ENCODE measurements at regions of chr19 and their contacts with region 1.

Region 1: DNA sequence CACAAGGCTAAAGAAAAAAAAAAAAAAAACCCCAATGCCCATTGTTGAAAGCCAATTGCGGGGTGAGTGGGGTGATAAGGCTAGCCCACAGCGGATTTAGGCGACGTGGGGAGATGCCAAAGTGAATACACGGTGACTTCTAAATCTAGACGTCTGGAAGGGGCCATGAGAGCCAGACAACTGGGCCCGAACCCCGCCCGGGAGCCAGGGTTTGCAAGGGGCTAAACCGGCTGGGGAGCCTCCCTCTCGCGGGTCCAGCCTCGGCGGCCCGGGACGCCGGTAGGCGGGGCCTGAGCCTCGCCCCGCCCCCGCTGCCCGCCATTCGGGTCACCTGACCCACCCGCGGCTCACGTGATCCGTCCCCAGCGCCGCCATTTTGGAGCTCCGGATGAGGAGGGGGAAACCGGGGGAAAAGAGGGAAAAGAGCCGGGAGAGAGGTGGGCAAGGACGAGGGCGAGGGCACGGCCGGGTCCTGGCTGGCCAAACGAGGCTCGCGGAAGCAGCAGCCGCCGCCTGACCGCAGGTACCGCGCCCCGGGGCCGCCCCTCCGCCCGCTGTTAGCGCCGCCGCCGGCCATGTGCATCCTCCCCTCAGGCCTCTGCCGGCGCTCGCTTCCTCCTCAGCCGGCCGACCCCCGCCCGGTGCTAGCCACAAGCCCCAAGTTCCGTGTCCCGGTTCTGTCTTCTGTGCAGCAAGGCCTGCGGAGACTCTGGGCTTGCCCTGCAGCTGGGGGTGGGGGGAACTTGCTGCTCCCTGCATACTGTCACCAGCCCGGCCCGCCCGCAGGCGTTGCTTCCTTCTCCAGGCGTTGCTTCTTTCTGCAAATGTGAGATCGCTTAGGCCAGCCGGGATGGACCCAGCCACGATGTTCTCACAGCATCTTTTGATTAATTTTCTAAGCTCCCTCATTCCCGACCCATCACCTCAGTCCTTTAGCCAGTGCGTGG is at the start of gene ZNF507:
- DNase-seq: peak in 1 of 2 donors; percentile 86
- H3K4me3 ChIP-seq: peak within 1 kb of the TSS; percentile 67 to 94
- H3K27ac ChIP-seq: peak within 1 kb of the TSS; percentile 51 to 73
- H3K4me1 ChIP-seq: peaks cover 3 to 22% of the 10 kb centered on the region in 2 donors
- H3K27me3 ChIP-seq: no peaks in the 10 kb centered on the region
- CTCF ChIP-seq: peak in 1 of 3 experiments; percentile 10
- total RNA-seq, gene ZNF507: 6.4 TPM

Region 2: DNA sequence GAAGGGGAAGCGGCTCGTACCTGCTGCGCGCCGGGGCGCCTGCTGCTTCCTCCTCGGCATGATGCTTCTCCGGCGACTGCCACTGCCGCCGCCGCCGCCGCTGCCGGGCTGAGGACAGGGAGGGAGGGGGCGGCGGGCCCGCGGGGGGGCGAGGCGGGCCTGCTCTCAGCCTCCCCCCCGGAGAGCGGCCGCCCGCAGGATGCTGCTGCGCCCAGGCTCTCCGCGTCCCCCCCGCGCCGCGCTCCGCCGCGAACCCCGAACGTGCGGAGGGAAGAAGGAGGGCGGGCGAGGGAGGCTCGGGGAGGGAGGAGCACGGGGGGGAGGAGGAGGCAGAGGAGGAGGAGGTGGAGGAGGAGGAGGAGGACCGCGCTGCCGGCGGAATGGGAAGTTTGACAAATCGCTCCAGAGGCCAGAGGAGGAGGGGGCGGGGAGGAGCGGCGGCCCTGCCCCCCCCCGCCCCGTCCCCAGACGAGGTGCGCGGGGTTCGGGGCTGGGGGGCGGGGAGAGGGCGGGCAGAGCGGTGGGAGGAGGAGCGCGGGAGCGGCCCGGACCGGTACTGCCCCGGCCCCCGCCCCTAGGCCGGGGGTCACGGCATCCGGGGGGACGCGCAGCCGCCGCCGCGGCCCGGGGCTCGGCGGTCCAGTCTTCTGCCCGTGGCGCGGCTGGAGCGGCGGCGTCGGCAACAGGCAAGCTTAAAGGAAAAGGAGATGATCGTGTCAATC is 996.2 kb before region 1 on chr19 and contains the start of gene TSHZ3:
- intact Hi-C with region 1: loop called (anchors 10 kb)
- DNase-seq: peak in 1 of 2 donors; percentile 85
- H3K4me3 ChIP-seq: peak within 1 kb of the TSS; percentile 88 to 98
- H3K27ac ChIP-seq: peak within 1 kb of the TSS; percentile 75 to 90
- H3K4me1 ChIP-seq: peaks cover 7 to 13% of the 10 kb centered on the region in 2 donors
- H3K27me3 ChIP-seq: no peaks in the 10 kb centered on the region
- CTCF ChIP-seq: no peak
- total RNA-seq, gene TSHZ3: 9.9 TPM

Region 3: DNA sequence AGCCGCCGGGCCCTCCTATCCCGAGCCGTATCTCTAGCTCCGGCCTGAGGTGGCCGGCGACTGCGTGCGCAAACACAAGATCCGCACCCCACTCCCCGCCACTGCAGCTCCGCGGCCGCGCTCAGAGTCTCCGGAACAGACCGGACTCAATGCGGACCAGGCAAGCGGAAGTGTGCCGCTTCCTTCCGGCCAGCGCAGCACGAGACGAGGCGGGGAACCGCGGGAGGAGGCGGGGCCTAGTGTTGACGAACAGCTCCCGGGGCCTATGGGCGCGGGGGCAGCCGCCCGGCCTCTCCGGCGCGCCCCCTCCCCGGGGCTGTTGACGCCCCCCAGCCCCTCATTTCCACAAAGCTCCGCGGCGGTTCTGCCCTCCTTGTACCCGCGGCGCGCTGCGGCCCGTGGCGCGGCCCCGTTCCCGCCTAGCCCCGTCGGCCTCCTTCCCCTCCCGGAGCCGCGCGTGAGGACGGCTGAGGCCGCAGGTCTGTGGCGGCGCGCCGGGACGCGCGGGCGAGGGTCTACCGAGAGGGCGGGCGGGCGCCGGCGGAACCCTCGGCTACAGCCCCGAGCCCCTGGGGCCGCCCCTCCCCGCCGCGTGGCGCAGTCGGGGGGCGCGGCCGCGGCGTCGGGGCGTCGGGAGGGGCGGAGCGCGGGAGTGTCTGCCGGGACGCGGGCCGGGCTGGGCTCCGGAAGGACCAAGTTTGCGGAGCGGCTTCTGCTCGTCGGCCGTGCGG is 60.1 kb after region 1 on chr19 and contains the start of gene DPY19L3:
- intact Hi-C with region 1: loop called (anchors 1 kb)
- DNase-seq: peak; percentile 81 to 97
- H3K4me3 ChIP-seq: peak within 1 kb of the TSS; percentile 93 to 94
- H3K27ac ChIP-seq: peak within 1 kb of the TSS; percentile 99 to 100
- H3K4me1 ChIP-seq: peaks cover 0 to 14% of the 10 kb centered on the region in 2 donors
- H3K27me3 ChIP-seq: no peaks in the 10 kb centered on the region
- CTCF ChIP-seq: no peak
- total RNA-seq, gene DPY19L3: 115 TPM